ENCODE measurements at regions of chr6 and their contacts with region 1.

Region 1: DNA sequence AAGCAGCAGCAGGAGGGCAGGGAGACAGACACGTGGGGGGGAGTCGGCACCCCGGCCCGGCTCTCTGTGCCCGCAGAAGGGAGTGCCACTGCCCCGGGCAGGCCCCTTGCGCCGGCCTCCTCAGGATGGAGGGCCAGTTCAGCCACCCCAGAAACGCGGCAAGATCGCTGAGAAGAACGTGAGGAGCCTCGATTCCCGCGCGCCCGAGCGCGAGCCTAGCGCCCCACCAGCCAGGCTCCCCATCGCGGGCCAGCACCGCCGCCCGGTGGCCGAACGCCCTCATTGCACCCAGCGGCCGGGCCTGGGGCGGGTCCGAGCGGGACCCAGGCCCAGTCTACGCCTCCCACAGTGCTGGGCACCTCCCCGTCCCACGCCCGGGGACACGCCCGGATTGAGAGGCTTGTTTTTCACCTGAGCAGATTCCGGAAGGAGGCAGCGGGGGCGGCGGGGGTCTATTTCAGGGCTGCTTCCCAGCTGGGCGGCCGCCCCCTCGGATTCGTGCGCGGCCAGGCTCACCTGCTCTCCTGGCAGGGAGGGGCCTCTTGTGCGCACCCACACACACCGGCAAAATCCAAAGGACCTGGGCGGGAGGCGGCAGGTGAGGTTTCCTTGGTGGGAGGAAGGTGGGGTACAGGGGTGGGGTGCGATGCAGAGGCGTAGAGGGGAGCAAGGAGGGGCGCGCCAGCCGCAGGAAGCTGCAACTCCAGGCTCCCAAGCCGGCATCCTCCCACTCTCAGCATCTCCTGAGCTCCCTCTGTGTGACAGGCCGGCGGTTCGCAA is 9.0 kb upstream of the GRM4 start:
- DNase-seq: peak; percentile 69
- ATAC-seq: peak; percentile 84
- H3K4me3 Mint-ChIP-seq: no peak overlapping the region
- H3K27ac Mint-ChIP-seq: no peak overlapping the region
- H3K4me1 Mint-ChIP-seq: peaks cover 5% of the 10 kb centered on the region
- H3K27me3 Mint-ChIP-seq: peaks cover 49% of the 10 kb centered on the region

Region 2: GRCh38 chr6:33744001-33744848 is 410.6 kb before region 1 on chr6:
- CTCF ChIA-PET with region 1: interaction called, 19 read pairs
- POLR2A ChIA-PET with region 1: interaction called, 3 read pairs
- DNase-seq: peak; percentile 80
- ATAC-seq: peak; percentile 87
- H3K4me3 Mint-ChIP-seq: no peak overlapping the region
- H3K27ac Mint-ChIP-seq: no peak overlapping the region
- H3K4me1 Mint-ChIP-seq: no peaks in the 10 kb centered on the region
- H3K27me3 Mint-ChIP-seq: peaks cover 13% of the 10 kb centered on the region

Region 3: DNA sequence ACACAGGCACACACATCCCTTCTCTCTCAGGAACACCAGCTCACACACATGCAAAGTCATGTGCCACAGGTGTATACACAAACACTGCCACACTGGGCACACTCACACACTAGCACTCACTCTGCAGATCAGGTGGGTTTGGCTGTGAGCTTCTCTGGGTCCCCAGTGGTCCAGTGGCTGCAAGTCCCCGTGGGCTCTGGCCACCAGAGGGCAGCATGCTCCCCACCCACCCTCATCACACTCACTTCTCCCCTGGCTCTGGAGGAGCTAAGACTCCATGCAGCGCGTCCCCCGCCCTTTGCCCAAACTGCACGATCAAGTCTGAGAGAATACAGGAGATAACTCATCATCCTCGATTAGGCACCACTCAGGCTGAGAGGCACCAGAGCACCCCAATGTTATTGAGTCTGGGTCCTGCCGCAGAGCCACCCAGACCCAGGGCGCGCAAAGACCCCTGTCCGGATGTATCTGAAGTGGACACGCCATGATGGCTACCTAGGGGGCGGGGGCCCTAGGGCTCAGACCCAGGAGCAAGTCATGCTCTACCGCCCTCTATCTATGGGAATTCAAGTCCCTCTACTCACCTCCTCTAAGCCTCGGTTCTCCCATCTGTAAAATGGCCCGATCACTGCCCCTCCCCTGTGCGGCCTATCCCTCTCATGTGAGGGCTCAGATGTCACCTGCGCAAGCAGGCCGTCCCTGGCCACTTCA is 99.5 kb before region 1 on chr6:
- CTCF ChIA-PET with region 1: interaction called, 19 read pairs
- POLR2A ChIA-PET with region 1: interaction called, 3 read pairs
- DNase-seq: peak; percentile 74
- ATAC-seq: peak; percentile 85
- H3K4me3 Mint-ChIP-seq: no peak overlapping the region
- H3K27ac Mint-ChIP-seq: no peak overlapping the region
- H3K4me1 Mint-ChIP-seq: no peaks in the 10 kb centered on the region
- H3K27me3 Mint-ChIP-seq: peaks cover 13% of the 10 kb centered on the region

Measured in activated CD8-positive, alpha-beta T cell treated with anti-CD3 and anti-CD28 coated beads, Interleukin-2, amount 10 ng/mL, durations not matched to agents 7 days and 5 days (primary cell).